ENCODE measurements at regions of chr1 and their contacts with region 1.

Region 1: GRCh38 chr1:229203030-229203751 is 67.7 kb upstream of the RAB4A start:
- DNase-seq: no peak
- CTCF ChIP-seq: no peak

Region 2: GRCh38 chr1:228978481-228979324 is 224.5 kb before region 1 on chr1:
- CTCF ChIA-PET with region 1: no interaction called
- POLR2A ChIA-PET with region 1: no interaction called
- DNase-seq: no peak
- CTCF ChIP-seq: no peak

Region 3: DNA sequence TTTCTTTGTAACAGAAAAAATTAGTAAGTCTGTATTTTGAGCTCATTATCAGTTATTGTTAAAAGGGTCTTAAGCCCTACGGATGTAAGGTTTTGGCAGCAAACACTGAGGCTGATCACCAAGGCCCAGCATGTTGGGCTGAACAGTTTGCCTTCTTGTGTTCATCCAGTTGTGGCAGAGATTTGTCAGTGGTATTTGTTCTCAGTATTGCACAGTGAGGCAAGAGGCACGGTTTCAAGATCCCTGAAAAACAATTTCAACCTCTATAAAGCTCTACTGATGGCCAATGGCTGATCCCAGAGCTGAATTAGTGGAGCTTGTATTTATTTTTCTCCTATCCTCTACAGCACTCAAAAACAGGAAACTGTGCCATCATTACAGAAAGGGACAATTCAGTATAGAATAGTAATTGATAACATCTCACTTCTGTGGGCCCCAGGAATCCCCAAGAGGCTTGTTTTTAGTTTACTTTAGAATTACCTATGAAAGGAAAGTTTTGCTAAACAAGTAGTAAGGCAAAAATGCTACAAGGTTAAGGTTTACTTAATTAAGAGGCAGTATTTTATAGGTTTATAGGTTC is 124.1 kb before region 1 on chr1:
- CTCF ChIA-PET with region 1: no interaction called
- POLR2A ChIA-PET with region 1: no interaction called
- DNase-seq: no peak
- CTCF ChIP-seq: no peak

Region 4: DNA sequence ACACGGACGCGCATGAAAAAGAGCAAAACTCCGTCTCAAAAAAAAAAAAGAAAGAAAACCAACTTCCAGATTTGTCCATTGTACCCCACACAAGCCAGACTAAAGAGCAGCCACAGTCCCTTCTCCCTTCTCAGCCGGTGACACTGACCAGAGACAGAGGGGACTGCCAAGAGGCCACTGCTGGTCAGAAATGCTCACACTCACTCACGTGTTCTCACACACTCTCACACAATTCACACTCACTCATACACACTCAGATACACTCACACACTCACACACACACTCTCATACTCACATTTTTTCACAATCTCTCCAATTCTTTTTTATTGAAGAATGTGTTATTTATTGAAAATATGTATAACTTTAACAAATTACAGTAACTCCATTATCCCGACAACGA is 23.0 kb before region 1 on chr1:
- CTCF ChIA-PET with region 1: no interaction called
- POLR2A ChIA-PET with region 1: no interaction called
- DNase-seq: no peak
- CTCF ChIP-seq: no peak

Region 5: GRCh38 chr1:229227298-229227919 is 24.2 kb after region 1 on chr1:
- CTCF ChIA-PET with region 1: interaction called, 13 read pairs
- POLR2A ChIA-PET with region 1: no interaction called
- DNase-seq: peak; percentile 77
- CTCF ChIP-seq: peak; percentile 75

Measured in GM10248 (cell line).